Panc1 (cell line): ENCODE measurements at regions of chr6 and their contacts with region 1.

Region 1: DNA sequence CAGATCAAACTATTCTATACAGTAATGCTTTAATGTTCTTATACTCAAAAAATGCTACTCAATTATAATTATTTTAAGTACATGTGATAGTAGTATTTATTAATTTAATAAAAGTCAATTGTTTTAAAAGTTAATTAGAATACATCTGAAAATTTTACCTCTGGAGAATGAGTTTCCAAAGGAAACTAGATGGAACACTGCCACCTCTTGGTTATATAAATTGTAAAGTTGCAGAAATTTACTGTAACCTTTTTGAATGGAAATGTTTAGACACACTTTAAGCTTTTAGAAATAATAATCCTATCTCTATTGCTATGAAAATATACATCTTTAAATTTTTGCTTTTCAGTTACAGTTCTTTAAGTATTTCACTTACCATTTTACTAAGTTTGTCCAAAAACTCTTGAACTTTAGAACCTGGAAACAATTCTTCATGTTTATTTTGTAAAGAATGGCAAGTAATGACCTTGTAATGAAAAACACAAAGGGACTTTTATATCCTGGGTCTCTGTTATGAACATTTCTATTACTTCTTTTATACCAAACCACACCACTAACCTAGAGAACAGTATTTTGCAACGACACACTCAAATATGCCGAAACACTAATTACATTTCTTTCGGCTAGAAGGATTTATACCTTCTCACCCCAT is 10.9 kb upstream of the BMP5 start:
- DNase-seq: no peak
- ATAC-seq: no peak
- H3K4me3 ChIP-seq: no peak overlapping the region
- H3K27ac ChIP-seq: peak overlapping the region; percentile 99; the same call in 1 of the 2 replicates
- H3K4me1 ChIP-seq: peaks cover 51% of the 10 kb centered on the region
- H3K27me3 ChIP-seq: no peaks in the 10 kb centered on the region
- CTCF ChIP-seq: peak; percentile 19; the same call in 1 of the 2 replicates

Region 2: DNA sequence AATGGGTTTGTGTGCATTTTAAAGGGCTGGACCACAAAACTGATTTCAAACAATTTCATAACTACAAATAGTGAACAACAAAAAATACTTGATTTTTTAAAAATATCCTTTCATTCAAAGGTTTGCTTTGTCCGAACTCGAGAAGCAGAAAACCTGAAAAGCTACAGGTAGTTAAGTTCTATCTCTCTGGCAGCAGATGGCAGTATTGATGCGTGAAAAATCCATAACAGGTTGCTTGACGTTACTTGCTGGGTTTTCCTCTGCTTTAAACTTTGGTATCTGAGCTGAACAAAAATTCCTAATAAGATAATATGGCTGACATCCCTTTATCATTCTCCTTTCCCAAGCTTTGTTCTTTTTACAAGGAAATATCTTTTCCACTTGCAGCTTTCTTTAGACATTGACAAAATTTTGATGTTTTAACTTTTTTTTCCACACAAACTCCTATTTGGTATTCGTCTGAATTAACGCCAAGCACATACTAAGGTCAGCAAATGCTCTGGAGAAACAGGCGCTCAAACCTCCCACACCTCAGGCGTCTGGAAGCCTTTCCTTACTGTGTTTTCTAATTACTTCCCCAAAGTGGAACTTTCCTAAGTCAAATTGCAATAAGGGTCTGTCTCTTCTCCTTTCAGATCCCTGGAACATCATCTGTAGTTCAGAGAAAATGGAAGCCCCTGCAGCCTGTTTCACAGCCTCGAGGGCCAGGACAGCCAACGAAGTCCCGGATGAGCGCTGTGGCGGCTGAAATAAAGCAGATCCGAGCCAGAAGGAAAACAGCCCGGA is 609.4 kb before region 1 on chr6:
- CTCF ChIA-PET with region 1: interaction called, 3 read pairs
- POLR2A ChIA-PET with region 1: no interaction called
- in situ Hi-C with region 1: no loop called
- intact Hi-C with region 1: loop called (anchors 2 kb)
- DNase-seq: peak; percentile 42
- ATAC-seq: peak; percentile 85
- H3K4me3 ChIP-seq: no peak overlapping the region
- H3K27ac ChIP-seq: peak overlapping the region; percentile 74
- H3K4me1 ChIP-seq: peaks cover 13% of the 10 kb centered on the region
- H3K27me3 ChIP-seq: peaks cover 3% of the 10 kb centered on the region; the same call in 1 of the 2 replicates
- CTCF ChIP-seq: peak; percentile 76; the same call in 1 of the 2 replicates

Region 3: GRCh38 chr6:55445648-55446204 is 440.6 kb before region 1 on chr6:
- CTCF ChIA-PET with region 1: no interaction called
- POLR2A ChIA-PET with region 1: no interaction called
- in situ Hi-C with region 1: no loop called
- intact Hi-C with region 1: loop called (anchors 2 kb)
- DNase-seq: peak; percentile 45
- ATAC-seq: peak; percentile 65
- H3K4me3 ChIP-seq: no peak overlapping the region
- H3K27ac ChIP-seq: peak overlapping the region; percentile 83; the same call in 1 of the 2 replicates
- H3K4me1 ChIP-seq: peaks cover 12% of the 10 kb centered on the region
- H3K27me3 ChIP-seq: no peaks in the 10 kb centered on the region
- CTCF ChIP-seq: peak; percentile 72; the same call in 1 of the 2 replicates

Region 4: GRCh38 chr6:55543633-55544309 is 342.5 kb before region 1 on chr6:
- CTCF ChIA-PET with region 1: no interaction called
- POLR2A ChIA-PET with region 1: no interaction called
- in situ Hi-C with region 1: no loop called
- intact Hi-C with region 1: loop called (anchors 10 kb)
- DNase-seq: no peak
- ATAC-seq: peak; percentile 91
- H3K4me3 ChIP-seq: no peak overlapping the region
- H3K27ac ChIP-seq: peak overlapping the region; percentile 61; the same call in 1 of the 2 replicates
- H3K4me1 ChIP-seq: peaks cover 3% of the 10 kb centered on the region; the same call in 1 of the 2 replicates
- H3K27me3 ChIP-seq: no peaks in the 10 kb centered on the region
- CTCF ChIP-seq: peak; percentile 67

Region 5: DNA sequence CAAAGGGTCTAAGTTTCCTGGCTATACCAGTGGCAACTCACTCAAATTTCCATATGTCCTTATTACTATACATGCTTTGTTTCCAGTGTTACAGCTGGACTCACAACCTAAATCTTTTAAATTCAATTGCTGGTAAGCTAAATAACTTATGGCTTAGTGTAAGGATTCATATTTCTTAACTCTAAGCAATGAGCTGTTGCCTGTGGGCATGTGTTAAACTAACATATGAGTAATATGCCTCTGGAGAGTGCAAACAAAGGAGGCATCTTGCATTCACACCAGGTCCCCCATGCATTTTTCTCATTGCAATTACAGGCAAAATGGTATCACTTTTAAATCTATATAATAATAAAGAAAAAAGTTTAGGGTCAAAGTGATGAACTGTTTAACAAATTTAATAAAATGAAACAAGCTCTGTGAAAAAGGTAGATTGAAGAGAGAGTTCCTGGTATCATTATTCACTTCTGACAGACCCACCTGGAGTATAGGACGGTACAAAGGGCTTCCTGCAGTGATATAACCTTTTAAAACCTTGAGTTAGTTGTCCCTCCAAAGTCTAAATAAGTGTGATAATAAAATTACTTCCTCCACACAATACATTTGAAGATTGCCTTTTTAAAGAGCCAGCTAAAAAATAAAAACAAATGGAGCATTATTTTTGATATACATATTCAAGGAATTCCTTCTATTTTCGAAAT is 249.8 kb before region 1 on chr6:
- CTCF ChIA-PET with region 1: no interaction called
- POLR2A ChIA-PET with region 1: no interaction called
- in situ Hi-C with region 1: no loop called
- intact Hi-C with region 1: loop called (anchors 10 kb)
- DNase-seq: peak; percentile 82
- ATAC-seq: peak; percentile 99
- H3K4me3 ChIP-seq: no peak overlapping the region
- H3K27ac ChIP-seq: peak overlapping the region; percentile 97
- H3K4me1 ChIP-seq: peaks cover 26% of the 10 kb centered on the region
- H3K27me3 ChIP-seq: no peaks in the 10 kb centered on the region
- CTCF ChIP-seq: no peak

Region 6: DNA sequence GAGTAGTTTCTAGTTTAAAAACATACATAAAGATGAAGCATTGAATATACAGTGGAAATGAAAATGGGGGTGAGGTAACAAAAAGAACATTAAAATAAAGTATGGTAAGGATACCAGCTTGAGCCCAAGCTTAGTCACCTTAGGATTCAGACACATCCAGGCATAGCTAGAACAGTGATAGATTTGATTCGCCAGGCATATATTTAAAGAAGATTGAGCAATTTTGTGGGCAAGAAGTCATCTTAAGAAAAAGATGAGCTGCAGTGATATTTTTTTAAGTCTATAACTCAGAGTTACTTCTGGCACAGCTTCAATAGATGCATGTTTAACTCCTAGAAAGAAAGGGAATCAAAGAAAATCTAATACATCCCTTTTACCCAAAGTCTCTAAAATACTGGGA is 108.8 kb before region 1 on chr6:
- CTCF ChIA-PET with region 1: no interaction called
- POLR2A ChIA-PET with region 1: no interaction called
- in situ Hi-C with region 1: no loop called
- intact Hi-C with region 1: loop called (anchors 10 kb)
- DNase-seq: no peak
- ATAC-seq: no peak
- H3K4me3 ChIP-seq: no peak overlapping the region
- H3K27ac ChIP-seq: peak overlapping the region; percentile 82; the same call in 1 of the 2 replicates
- H3K4me1 ChIP-seq: peaks cover 28% of the 10 kb centered on the region; the same call in 1 of the 2 replicates
- H3K27me3 ChIP-seq: no peaks in the 10 kb centered on the region
- CTCF ChIP-seq: no peak

Region 7: DNA sequence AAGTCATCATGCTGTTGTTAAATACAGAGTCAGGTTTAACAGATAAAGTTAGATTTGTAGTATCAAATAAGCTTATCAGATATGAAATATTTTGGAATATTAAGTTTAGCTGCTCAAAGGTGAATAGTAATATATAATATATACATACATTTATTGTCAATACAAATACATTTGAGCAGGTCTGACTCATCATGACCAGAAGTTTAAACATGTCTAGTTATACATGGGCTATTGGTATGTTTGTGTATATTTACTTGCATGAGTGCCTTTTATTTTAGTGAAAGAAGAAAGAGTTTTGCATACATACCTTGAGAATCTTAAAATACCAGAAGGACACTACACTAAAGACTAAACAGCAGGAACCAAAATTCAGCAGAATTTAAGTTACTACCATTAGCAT is 87.7 kb before region 1 on chr6:
- CTCF ChIA-PET with region 1: no interaction called
- POLR2A ChIA-PET with region 1: no interaction called
- in situ Hi-C with region 1: no loop called
- intact Hi-C with region 1: no loop called
- DNase-seq: no peak
- ATAC-seq: no peak
- H3K4me3 ChIP-seq: no peak overlapping the region
- H3K27ac ChIP-seq: no peak overlapping the region; the same call in 1 of the 2 replicates
- H3K4me1 ChIP-seq: no peaks in the 10 kb centered on the region
- H3K27me3 ChIP-seq: no peaks in the 10 kb centered on the region
- CTCF ChIP-seq: no peak

Region 8: GRCh38 chr6:56292505-56293181 is 406.3 kb after region 1 on chr6:
- CTCF ChIA-PET with region 1: no interaction called
- POLR2A ChIA-PET with region 1: no interaction called
- in situ Hi-C with region 1: no loop called
- intact Hi-C with region 1: loop called (anchors 10 kb)
- DNase-seq: peak; percentile 72
- ATAC-seq: peak; percentile 90
- H3K4me3 ChIP-seq: no peak overlapping the region
- H3K27ac ChIP-seq: peak overlapping the region; percentile 59; the same call in 1 of the 2 replicates
- H3K4me1 ChIP-seq: peaks cover 8% of the 10 kb centered on the region; the same call in 1 of the 2 replicates
- H3K27me3 ChIP-seq: no peaks in the 10 kb centered on the region
- CTCF ChIP-seq: peak; percentile 77